Activated CD8-positive, alpha-beta T cell treated with anti-CD3 and anti-CD28 coated beads, Interleukin-2, amount 10 ng/mL, durations not matched to agents 7 days and 5 days (primary cell): ENCODE measurements at regions of chr11 and their contacts with region 1.

Region 1: DNA sequence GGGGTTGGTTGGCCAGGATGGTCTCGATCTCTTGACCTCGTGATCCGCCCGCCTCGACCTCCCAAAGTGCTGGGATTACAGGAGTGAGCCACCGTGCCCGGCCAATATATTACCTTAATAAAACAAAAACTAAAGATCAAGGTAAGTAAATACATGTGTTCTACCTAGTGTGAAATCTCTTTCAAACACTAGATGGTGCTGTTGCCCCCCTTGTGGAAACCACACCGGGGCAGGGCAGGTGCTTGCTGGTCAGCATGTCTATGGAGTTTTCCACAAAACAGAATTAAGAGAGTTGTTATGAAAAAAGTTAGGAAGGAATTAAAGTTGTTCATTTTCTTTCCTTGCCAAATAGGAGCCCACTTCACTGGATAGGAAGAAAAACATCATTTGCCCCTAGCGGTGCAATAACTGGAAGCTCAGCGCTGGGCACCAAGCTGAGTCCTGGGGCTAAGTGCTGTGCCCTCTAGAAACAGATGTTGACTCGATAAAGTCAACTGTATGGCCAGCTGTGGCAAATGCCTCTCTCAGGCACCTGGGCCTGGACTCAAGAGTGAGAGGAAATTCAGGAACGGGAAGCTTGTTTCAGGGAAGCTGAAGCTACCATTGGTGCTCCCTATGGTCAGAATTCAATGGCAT is 6.3 kb upstream of the KCNJ5 start:
- DNase-seq: peak; percentile 75
- ATAC-seq: peak; percentile 85
- H3K4me3 Mint-ChIP-seq: no peak overlapping the region
- H3K27ac Mint-ChIP-seq: no peak overlapping the region
- H3K4me1 Mint-ChIP-seq: peaks cover 4% of the 10 kb centered on the region
- H3K27me3 Mint-ChIP-seq: peaks cover 61% of the 10 kb centered on the region

Region 2: DNA sequence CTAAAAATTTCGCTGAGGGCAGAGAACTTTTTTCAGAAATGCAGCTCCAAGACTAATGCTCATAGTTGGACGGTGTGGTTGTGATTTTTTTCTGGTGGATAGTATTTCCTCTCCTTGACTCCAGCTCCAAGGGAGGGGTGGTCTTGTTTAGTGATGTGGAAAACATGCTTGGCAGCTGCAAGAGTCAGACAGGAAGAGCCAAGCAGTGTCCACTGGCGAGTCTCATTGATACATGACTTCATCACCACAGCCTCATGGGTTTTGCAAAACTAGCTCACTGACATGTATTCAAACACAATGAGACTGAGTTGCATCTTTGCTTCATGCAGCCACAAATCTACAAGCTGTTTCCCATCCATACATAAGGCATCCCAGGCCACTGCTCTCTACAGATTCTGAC is 10.4 kb before region 1 on chr11:
- CTCF ChIA-PET with region 1: interaction called, 16 read pairs
- POLR2A ChIA-PET with region 1: no interaction called
- DNase-seq: no peak
- ATAC-seq: no peak
- H3K4me3 Mint-ChIP-seq: no peak overlapping the region
- H3K27ac Mint-ChIP-seq: no peak overlapping the region
- H3K4me1 Mint-ChIP-seq: peaks cover 5% of the 10 kb centered on the region
- H3K27me3 Mint-ChIP-seq: peaks cover 18% of the 10 kb centered on the region

Region 3: DNA sequence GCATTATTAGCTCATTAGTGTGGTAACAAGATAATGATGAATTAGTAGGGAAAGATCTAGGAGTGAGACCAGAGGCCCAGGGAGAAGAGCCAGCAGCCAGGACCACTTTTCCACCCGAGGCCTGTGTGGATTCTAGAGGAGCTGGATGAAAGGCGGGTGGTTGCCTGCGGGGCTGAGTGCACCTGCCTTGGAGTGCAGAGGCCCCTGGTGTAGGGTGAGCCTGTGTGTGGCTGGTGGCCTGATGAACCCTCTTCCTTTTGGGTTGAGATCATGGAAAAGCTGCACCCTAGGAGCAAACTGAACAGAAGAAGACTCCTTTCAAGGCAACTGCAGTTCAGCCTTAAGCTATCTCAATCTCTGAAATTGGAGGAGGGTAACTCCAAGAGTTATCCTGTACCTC is 63.8 kb after region 1 on chr11:
- CTCF ChIA-PET with region 1: interaction called, 207 read pairs
- POLR2A ChIA-PET with region 1: no interaction called
- DNase-seq: no peak
- ATAC-seq: no peak
- H3K4me3 Mint-ChIP-seq: no peak overlapping the region
- H3K27ac Mint-ChIP-seq: no peak overlapping the region
- H3K4me1 Mint-ChIP-seq: no peaks in the 10 kb centered on the region
- H3K27me3 Mint-ChIP-seq: peaks cover 27% of the 10 kb centered on the region

Region 4: DNA sequence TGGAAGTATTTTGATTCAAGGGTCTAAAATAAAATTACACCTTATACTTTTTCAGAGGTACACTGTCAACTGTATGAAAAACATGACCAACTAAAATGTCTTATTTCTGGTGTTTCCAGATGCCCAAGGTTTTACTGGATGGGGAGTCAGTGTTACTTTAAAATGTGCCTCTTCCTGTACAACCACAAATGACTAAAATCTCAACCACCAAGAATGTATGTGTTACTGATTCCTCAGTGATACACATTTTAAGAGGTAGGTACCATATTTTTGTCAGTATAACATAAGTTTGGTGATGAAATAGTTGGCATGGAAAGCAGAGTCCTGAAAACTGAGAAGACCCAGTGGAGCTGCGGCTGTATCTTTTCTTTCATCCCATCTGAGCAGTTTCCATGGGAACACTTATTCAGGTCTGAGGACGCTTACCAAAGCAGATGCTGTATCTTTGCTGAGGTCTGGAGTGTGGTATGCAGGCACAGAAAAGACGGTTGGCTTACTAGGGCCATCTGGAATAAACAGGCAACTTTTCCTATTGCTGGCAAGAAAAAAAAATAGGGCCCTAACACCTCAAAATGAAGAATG is 79.0 kb after region 1 on chr11:
- CTCF ChIA-PET with region 1: interaction called, 207 read pairs
- POLR2A ChIA-PET with region 1: no interaction called
- DNase-seq: peak; percentile 18
- ATAC-seq: peak; percentile 43
- H3K4me3 Mint-ChIP-seq: no peak overlapping the region
- H3K27ac Mint-ChIP-seq: peak overlapping the region; percentile 65
- H3K4me1 Mint-ChIP-seq: peaks cover 34% of the 10 kb centered on the region
- H3K27me3 Mint-ChIP-seq: peaks cover 6% of the 10 kb centered on the region

Region 5: GRCh38 chr11:129267716-129268115 is 382.9 kb after region 1 on chr11:
- CTCF ChIA-PET with region 1: no interaction called
- POLR2A ChIA-PET with region 1: no interaction called
- DNase-seq: no peak
- ATAC-seq: no peak
- H3K4me3 Mint-ChIP-seq: no peak overlapping the region
- H3K27ac Mint-ChIP-seq: no peak overlapping the region
- H3K4me1 Mint-ChIP-seq: no peaks in the 10 kb centered on the region
- H3K27me3 Mint-ChIP-seq: no peaks in the 10 kb centered on the region